Right ventricle myocardium inferior (tissue), 1 donor: ENCODE measurements at regions of chr20 and their contacts with region 1.

Region 1: GRCh38 chr20:35277531-35278395 is at the start of gene MMP24OS:
- DNase-seq: peak; percentile 97
- ATAC-seq: peak; percentile 97
- total RNA-seq, gene MMP24OS: 50.1 TPM

Region 2: GRCh38 chr20:34834459-34834893 is 443.3 kb before region 1 on chr20:
- intact Hi-C with region 1: loop called (anchors 10 kb)
- DNase-seq: no peak
- ATAC-seq: no peak

Region 3: DNA sequence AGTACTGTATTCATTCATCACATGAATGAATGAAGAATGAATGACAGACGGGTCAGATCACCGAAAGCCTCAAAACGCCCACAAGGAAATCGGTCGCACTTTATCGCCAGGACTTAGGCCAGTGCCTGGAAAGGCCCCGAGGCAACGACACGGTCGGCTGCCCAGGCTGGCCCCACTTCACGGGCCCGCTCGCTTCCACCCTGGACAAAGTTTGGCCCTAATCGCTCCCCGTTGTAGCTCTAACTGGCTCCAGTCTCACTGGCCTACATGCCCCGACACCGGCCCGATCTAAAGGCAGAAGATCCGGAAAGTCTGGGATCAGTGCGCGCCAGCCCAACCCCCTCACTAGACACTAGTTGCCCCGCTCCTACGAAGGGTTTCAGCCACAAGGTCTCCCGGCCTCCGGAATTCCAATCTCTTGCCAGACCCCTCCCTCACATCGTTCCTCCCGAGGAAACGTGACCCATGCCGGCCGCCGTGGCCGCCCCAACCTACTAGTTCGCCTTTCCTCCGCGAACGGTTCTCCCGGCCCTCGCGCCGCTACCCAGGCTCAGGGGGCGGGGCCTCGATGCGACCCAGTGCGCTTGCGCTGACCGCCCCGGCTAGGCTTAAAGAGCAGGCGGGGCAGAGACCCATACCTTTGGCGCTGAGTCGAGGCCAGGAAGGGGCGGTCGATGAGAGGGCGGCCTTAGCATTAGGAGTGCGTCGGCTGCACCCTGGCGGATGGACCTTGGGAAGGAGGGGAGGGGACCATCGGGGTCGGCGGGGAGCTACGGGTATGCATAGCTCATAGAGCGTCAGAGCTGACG is 322.3 kb before region 1 on chr20 and contains the starts of genes GSS and MYH7B:
- intact Hi-C with region 1: loop called (anchors 10 kb)
- DNase-seq: peak; percentile 99
- ATAC-seq: peak; percentile 97
- total RNA-seq, gene GSS: 17.6 TPM
- total RNA-seq, gene MYH7B: 230 TPM

Region 4: DNA sequence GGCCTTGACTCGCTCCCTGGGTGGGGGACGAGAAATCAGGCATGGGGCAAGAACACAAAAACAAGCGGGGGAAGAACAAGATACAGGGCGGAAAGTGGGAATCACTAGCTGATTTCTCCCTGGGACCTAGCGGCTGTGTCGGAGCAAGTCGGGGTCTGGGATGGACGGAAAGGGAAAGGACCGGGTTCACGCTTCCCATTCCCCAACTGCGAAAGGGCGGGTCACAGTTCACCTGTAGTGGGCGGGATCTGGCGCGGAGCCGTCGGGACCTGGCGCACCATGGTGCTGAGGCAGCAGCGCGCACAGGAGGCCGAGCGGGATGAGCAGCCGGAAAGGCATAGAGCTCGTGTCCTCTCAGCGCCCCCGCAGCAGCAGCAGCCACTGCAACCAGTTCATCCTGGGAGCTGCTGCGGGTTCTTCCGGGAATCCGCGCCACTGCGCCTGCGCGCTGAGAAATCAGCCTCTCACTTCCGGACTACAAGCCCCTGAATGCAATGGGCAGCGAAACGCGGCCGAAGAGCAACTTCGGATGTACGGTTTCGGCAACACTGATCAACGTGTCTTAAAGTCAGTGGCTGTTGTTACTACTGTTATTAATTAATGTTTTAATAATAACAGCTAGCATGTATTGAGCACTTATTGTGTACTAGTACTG is 130.7 kb before region 1 on chr20 and contains the start of gene EDEM2:
- intact Hi-C with region 1: loop called (anchors 5 kb)
- DNase-seq: peak; percentile 97
- ATAC-seq: peak; percentile 92
- total RNA-seq, gene EDEM2: 12.7 TPM

Region 5: GRCh38 chr20:35395728-35396127 is 118.0 kb after region 1 on chr20:
- intact Hi-C with region 1: no loop called
- DNase-seq: no peak
- ATAC-seq: no peak